ENCODE measurements at regions of chr2 and their contacts with region 1.

Region 1: GRCh38 chr2:85209887-85210286 is 76.7 kb downstream of the TCF7L1 start:
- DNase-seq: no peak
- CTCF ChIP-seq: no peak

Region 2: DNA sequence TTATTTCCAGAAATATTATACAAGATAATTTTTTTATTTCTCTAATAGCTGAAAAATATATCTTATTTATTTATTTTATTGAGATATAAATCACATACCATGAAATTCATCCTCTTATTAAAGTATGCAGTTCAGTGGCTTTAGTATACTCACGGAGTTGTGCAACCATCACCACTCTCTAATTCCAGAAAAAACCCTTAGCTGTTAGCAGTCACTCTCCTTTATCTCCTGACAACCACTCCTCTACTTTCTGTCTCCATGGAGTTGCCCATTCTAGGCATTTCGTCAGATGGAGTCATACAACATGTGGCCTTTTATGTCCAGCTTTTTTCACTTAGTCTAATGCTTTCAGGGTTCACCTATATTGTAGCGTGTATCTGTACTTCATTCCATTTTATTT is 10.2 kb before region 1 on chr2:
- CTCF ChIA-PET with region 1: no interaction called
- POLR2A ChIA-PET with region 1: no interaction called
- DNase-seq: no peak
- CTCF ChIP-seq: no peak

Region 3: DNA sequence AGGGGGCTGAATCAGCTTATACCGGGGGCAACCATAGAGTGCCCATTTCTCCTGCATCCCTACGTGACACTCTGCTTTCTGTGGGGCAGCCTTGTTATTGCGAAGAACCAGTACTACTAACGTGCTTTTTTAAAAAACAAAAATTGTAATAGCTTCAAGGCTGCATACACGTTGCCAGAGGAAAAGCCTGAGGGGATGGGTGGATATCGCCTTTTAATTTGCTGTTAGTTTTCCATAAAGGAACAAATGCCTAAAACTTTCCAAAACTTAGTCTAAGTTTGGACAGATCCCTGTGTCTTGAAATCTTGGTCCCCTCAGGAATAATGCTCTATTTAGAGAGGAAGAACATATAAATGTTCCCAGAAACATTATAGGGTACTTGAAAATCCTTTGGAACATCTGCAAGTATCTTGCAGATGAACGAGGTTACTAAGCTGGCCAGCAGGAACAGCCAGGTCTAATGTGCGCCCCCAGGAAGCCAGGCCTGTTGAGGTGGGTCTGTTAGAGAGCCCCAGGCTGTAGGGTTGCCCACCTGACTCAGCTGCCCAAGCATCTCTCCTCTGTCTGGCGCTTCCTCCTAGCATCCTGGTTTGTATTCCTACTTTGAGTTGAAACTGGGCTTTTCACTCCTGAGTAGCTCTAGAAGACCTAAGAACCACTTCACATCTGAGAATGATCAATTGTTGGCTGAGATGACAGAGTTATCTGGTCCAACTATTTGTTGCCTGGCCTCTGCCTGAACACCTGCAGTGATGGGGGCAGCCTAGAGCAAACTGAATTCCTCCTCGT is 21.0 kb after region 1 on chr2:
- CTCF ChIA-PET with region 1: interaction called, 3 read pairs
- POLR2A ChIA-PET with region 1: interaction called, 12 read pairs
- DNase-seq: no peak
- CTCF ChIP-seq: no peak